ENCODE measurements at regions of chr5 and their contacts with region 1.

Region 1: GRCh38 chr5:178163772-178164735 is 10.4 kb upstream of the NHP2 start:
- DNase-seq: peak; percentile 64 to 75
- ATAC-seq: peak; percentile 93 to 95
- H3K4me3 ChIP-seq: peak overlapping the region in 3 of 4 donors; percentile 5 to 49 (median 39)
- H3K27ac ChIP-seq: no peak overlapping the region
- H3K4me1 ChIP-seq: peaks cover 0 to 3% of the 10 kb centered on the region in 2 donors
- H3K27me3 ChIP-seq: peaks cover 0 to 13% (median 9%) of the 10 kb centered on the region in 3 donors
- CTCF ChIP-seq: peak; percentile 94 to 100 (median 98)
- POLR2A ChIP-seq: no peak

Region 2: GRCh38 chr5:178069909-178070308 is 94.1 kb before region 1 on chr5:
- in situ Hi-C with region 1: loop called (anchors 5 kb)
- intact Hi-C with region 1: no loop called
- DNase-seq: no peak
- ATAC-seq: peak in 1 of 2 donors; percentile 45
- H3K4me3 ChIP-seq: no peak overlapping the region
- H3K27ac ChIP-seq: no peak overlapping the region
- H3K4me1 ChIP-seq: no peaks in the 10 kb centered on the region
- H3K27me3 ChIP-seq: peaks cover 0 to 11% (median 2%) of the 10 kb centered on the region in 3 donors
- CTCF ChIP-seq: peak in 1 of 5 experiments; percentile 14
- POLR2A ChIP-seq: no peak

Region 3: GRCh38 chr5:178075840-178076548 is 88.1 kb before region 1 on chr5:
- in situ Hi-C with region 1: loop called in 3 of 4 experiments (anchors 5 kb)
- intact Hi-C with region 1: loop called (anchors 1 kb)
- DNase-seq: peak; percentile 31 to 46
- ATAC-seq: peak; percentile 65 to 87
- H3K4me3 ChIP-seq: no peak overlapping the region
- H3K27ac ChIP-seq: no peak overlapping the region
- H3K4me1 ChIP-seq: no peaks in the 10 kb centered on the region
- H3K27me3 ChIP-seq: peaks cover 0 to 17% (median 2%) of the 10 kb centered on the region in 3 donors
- CTCF ChIP-seq: peak; percentile 80 to 89 (median 86)
- POLR2A ChIP-seq: no peak

Region 4: GRCh38 chr5:178120868-178121357 is 43.1 kb before region 1 on chr5:
- in situ Hi-C with region 1: no loop called
- intact Hi-C with region 1: loop called (anchors 1 kb)
- DNase-seq: peak; percentile 89 to 95
- ATAC-seq: peak; percentile 81 to 89
- H3K4me3 ChIP-seq: peak overlapping the region; percentile 45 to 70 (median 54)
- H3K27ac ChIP-seq: peak overlapping the region; percentile 73 to 85 (median 78)
- H3K4me1 ChIP-seq: peaks cover 37 to 38% of the 10 kb centered on the region in 2 donors
- H3K27me3 ChIP-seq: peaks cover 5 to 12% (median 10%) of the 10 kb centered on the region in 3 donors
- CTCF ChIP-seq: peak; percentile 53 to 82 (median 69)
- POLR2A ChIP-seq: peak in 1 of 2 donors; percentile 14

Region 5: DNA sequence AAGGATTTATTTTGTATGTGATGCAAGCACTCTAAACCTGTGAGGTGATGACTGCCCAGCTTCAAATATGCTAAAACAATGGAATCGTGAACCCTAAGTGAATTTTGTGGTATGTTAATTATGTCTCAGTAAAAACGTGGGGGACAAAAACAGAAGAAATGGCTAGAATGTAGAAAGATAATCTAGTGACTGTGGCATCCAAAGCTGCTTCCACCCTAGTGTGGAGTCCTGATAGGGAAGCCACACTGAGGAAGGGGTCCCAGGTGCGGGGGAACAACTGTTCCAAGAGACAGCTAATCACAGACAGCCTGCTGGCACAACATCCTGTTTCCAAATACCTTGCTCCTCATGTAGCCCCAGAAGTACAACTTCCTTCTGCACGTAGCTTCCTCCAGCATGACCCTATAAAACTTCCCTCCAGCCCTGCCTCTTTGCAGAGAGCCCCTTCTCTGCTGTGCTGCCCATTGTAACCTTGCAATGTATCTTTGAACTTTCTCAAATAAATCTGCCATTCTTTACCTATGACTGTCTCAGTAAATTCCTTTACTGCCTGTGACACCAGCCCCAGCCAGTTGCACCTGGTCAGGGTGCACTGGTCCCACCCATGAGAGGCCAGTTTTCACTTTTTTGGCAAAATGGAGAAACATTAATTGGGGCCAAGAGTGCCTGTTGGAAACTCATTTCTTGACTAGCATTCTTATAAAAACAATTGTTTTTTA is 18.3 kb after region 1 on chr5:
- in situ Hi-C with region 1: no loop called
- intact Hi-C with region 1: no loop called
- DNase-seq: no peak
- ATAC-seq: no peak
- H3K4me3 ChIP-seq: no peak overlapping the region
- H3K27ac ChIP-seq: no peak overlapping the region
- H3K4me1 ChIP-seq: no peaks in the 10 kb centered on the region
- H3K27me3 ChIP-seq: peaks cover 0 to 4% (median 0%) of the 10 kb centered on the region in 3 donors
- CTCF ChIP-seq: no peak
- POLR2A ChIP-seq: no peak